Activated CD4-positive, alpha-beta memory T cell treated with anti-CD3 and anti-CD28 coated beads for 36 hours (primary cell): ENCODE measurements at regions of chr2 and their contacts with region 1.

Region 1: DNA sequence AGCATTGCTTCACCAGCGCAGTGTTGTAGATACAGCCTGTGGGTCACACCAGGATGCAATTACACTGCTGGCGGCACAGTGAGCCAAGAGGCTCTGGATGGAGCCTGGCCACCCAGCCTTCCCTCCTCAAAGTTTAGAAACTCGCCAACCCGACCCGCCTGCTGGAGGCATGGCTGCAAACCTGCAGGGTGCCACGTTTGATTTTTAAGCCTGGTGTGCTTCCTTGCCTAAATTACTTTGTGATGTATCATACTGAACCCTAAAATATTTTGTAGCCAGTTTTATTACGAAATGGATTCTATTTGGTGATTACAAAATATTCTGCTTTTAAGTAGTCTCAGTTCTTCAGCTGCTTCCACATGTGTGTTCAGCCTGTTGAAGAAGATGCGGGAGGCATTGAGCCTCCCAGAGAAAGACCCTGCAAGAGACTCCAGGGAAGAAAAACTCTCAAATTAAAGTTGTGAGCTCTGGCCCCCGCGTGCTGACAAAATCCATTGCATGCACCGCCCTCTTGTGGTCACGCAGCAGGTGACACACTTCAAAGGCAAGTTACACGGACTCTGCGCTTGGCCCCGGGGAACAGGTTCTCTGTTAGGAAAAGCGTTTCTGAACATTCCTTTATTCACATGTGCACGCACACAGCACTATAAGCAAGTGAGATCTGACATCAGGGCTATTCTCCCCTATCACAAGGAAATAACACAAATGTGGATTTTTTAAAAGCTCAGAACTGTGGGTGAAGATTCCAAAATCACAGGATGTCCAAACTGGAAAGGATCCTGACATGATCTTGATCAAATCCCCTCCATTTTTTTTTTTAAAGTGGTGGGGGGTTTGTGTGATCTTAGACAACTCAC is 63.0 kb upstream of the TWIST2 start:
- DNase-seq: peak; percentile 69
- H3K4me3 Mint-ChIP-seq: no peak overlapping the region
- H3K27ac Mint-ChIP-seq: no peak overlapping the region
- H3K4me1 Mint-ChIP-seq: no peaks in the 10 kb centered on the region
- H3K27me3 Mint-ChIP-seq: peaks cover 7% of the 10 kb centered on the region

Region 2: GRCh38 chr2:238370823-238371372 is 414.0 kb before region 1 on chr2:
- CTCF ChIA-PET with region 1: interaction called, 14 read pairs
- POLR2A ChIA-PET with region 1: no interaction called
- intact Hi-C with region 1: loop called (anchors 2 kb)
- DNase-seq: peak; percentile 67
- H3K4me3 Mint-ChIP-seq: no peak overlapping the region
- H3K27ac Mint-ChIP-seq: no peak overlapping the region
- H3K4me1 Mint-ChIP-seq: peaks cover 2% of the 10 kb centered on the region
- H3K27me3 Mint-ChIP-seq: no peaks in the 10 kb centered on the region

Region 3: DNA sequence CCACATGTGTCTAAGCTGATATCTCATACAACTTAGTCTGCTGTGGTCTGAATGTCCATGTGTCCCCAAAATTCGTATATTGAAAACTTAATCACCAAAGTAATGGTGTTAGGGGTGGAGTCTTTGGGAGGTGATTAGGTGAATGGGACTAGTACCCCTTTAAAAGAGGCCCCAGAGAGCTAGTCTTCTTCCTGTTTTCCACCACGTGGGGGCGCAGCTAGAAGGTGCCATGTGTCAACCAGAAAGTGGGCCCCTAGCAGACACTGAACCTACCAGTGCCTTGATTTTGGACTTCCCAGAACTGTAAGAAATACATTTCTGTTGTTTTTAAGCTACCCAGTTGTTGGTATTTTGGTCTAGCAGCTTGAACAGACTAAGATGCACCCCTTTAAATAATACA is 271.6 kb before region 1 on chr2:
- CTCF ChIA-PET with region 1: interaction called, 14 read pairs
- POLR2A ChIA-PET with region 1: no interaction called
- intact Hi-C with region 1: loop called (anchors 1 kb)
- DNase-seq: peak; percentile 51
- H3K4me3 Mint-ChIP-seq: no peak overlapping the region
- H3K27ac Mint-ChIP-seq: no peak overlapping the region
- H3K4me1 Mint-ChIP-seq: no peaks in the 10 kb centered on the region
- H3K27me3 Mint-ChIP-seq: peaks cover 2% of the 10 kb centered on the region

Region 4: GRCh38 chr2:238720232-238720672 is 64.6 kb before region 1 on chr2:
- CTCF ChIA-PET with region 1: interaction called, 4 read pairs
- POLR2A ChIA-PET with region 1: no interaction called
- intact Hi-C with region 1: loop called (anchors 5 kb)
- DNase-seq: peak; percentile 64
- H3K4me3 Mint-ChIP-seq: no peak overlapping the region
- H3K27ac Mint-ChIP-seq: no peak overlapping the region
- H3K4me1 Mint-ChIP-seq: no peaks in the 10 kb centered on the region
- H3K27me3 Mint-ChIP-seq: peaks cover 21% of the 10 kb centered on the region

Region 5: DNA sequence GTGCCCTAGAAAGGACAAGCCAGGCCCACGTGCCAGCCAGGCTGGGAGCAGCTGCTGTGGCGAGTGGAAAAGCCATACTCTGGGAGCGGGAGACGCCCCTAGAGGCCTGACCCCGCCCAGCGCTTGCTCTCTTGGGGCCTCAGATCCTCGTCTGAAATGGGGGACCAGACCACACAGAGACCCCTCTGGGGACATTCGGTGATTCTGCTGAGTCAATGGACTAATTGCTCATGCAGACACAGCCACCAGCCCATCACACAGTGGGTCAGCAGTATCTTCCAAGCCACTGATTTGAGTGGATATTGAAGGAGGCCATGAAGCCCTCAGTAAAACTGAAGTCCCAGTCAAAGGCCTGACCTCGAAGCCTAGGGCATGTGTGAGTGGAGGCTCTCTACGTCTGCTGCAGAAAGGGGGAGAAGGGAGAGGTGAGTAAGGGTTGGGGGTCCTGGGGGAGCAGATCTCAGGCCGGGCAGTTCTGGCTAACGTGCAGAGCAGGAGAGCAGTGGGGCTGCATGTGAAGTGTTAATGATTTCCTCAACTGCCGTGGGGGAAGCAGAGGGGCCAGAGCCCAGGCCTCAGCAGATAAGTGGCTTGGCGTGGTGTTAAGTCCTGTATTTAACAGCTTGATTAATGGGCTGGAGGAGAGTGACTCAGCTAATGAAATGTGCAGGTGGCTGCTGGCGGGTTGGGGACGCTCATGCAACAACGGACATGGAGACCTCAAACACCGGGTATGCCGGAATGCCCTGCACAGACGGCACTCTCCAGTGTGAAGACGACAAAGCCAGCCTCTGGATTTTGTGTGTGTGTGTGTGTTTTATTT is 41.4 kb before region 1 on chr2:
- CTCF ChIA-PET with region 1: no interaction called
- POLR2A ChIA-PET with region 1: no interaction called
- intact Hi-C with region 1: no loop called
- DNase-seq: no peak
- H3K4me3 Mint-ChIP-seq: no peak overlapping the region
- H3K27ac Mint-ChIP-seq: no peak overlapping the region
- H3K4me1 Mint-ChIP-seq: no peaks in the 10 kb centered on the region
- H3K27me3 Mint-ChIP-seq: peaks cover 32% of the 10 kb centered on the region